ENCODE measurements at regions of chr10 and their contacts with region 1.

Region 1: GRCh38 chr10:27742195-27743011 is 3.2 kb downstream of the MKX start:
- DNase-seq: peak; percentile 88
- H3K4me3 Mint-ChIP-seq: peak overlapping the region; percentile 68
- H3K27ac Mint-ChIP-seq: no peak overlapping the region
- H3K4me1 Mint-ChIP-seq: peaks cover 31% of the 10 kb centered on the region
- H3K27me3 Mint-ChIP-seq: peaks cover 49% of the 10 kb centered on the region

Region 2: GRCh38 chr10:27558612-27559020 is 183.8 kb before region 1 on chr10:
- CTCF ChIA-PET with region 1: interaction called, 3 read pairs
- intact Hi-C with region 1: loop called (anchors 2 kb)
- DNase-seq: peak; percentile 60
- H3K4me3 Mint-ChIP-seq: no peak overlapping the region
- H3K27ac Mint-ChIP-seq: no peak overlapping the region
- H3K4me1 Mint-ChIP-seq: no peaks in the 10 kb centered on the region
- H3K27me3 Mint-ChIP-seq: no peaks in the 10 kb centered on the region

Region 3: GRCh38 chr10:27998254-27999004 is 256.0 kb after region 1 on chr10:
- CTCF ChIA-PET with region 1: no interaction called
- intact Hi-C with region 1: loop called (anchors 5 kb)
- DNase-seq: peak; percentile 21
- H3K4me3 Mint-ChIP-seq: peak overlapping the region; percentile 82
- H3K27ac Mint-ChIP-seq: no peak overlapping the region
- H3K4me1 Mint-ChIP-seq: peaks cover 10% of the 10 kb centered on the region
- H3K27me3 Mint-ChIP-seq: peaks cover 31% of the 10 kb centered on the region

Region 4: GRCh38 chr10:28054228-28054837 is 311.9 kb after region 1 on chr10:
- CTCF ChIA-PET with region 1: no interaction called
- intact Hi-C with region 1: no loop called
- DNase-seq: no peak
- H3K4me3 Mint-ChIP-seq: no peak overlapping the region
- H3K27ac Mint-ChIP-seq: no peak overlapping the region
- H3K4me1 Mint-ChIP-seq: no peaks in the 10 kb centered on the region
- H3K27me3 Mint-ChIP-seq: no peaks in the 10 kb centered on the region

Region 5: DNA sequence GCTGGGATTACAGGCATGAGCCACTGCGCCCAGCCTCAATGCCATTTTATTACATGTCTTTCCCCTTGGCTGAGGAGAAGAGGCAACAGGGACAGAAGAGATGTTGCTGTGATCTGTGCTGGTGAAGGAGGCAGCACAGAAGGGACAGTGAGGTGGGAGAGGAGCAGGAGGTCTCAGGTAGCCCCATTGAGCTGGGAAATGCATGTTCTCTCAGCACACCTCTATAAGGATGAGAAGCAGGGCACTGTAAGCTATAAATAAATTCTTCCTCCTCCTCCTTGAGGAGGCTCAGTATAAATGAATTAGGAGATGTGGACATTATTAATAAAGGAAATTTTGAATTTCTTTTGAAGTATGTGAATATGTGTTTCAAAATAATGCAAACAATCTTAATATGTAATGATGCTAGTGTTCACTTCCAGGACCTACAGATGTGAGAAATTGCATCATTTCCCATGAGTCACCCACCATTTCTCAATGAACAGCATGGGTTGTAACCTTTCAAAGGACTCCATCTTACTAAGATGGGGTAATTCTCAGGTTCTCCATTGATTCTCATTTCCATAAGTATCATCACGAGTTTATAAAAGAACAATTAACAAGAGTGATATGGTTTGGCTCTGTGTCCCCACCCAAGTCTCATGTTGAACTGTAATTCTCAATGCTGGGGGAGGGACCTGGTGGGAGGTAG is 345.4 kb after region 1 on chr10:
- CTCF ChIA-PET with region 1: no interaction called
- intact Hi-C with region 1: loop called (anchors 2 kb)
- DNase-seq: peak; percentile 51
- H3K4me3 Mint-ChIP-seq: no peak overlapping the region
- H3K27ac Mint-ChIP-seq: peak overlapping the region; percentile 85
- H3K4me1 Mint-ChIP-seq: peaks cover 16% of the 10 kb centered on the region
- H3K27me3 Mint-ChIP-seq: no peaks in the 10 kb centered on the region